A673 (cell line): ENCODE measurements at regions of chr13 and their contacts with region 1.

Region 1: DNA sequence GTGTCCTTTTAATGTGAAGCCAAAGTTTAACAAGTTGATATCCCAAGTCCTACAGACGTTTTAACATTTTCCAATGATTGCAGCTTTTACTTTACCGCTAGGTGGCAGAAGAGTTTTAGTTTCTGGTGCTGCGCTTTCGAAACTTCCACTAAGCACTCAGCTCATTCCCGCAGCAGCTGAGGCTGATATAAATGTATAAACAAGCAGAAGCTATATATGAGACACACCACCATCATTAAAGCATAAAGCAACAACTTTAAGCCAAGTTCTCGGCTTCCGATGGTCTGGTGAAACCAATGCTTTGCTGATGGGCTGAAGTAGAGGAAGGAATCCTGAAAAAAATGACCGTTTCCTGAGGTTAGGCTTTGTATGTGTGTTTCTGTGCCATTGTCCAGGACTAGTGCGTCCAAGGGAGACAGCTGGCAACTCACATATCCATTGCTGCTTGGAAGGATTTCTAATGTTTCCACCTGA is 753.9 kb downstream of the OLFM4 start:
- DNase-seq: peak; percentile 77
- H3K4me3 ChIP-seq: peak overlapping the region; percentile 2
- H3K27ac ChIP-seq: no peak overlapping the region
- H3K4me1 ChIP-seq: no peaks in the 10 kb centered on the region
- H3K27me3 ChIP-seq: no peaks in the 10 kb centered on the region
- CTCF ChIP-seq: peak; percentile 74

Region 2: GRCh38 chr13:53151336-53152056 is 631.0 kb before region 1 on chr13:
- CTCF ChIA-PET with region 1: no interaction called
- POLR2A ChIA-PET with region 1: no interaction called
- intact Hi-C with region 1: no loop called
- DNase-seq: peak; percentile 79
- H3K4me3 ChIP-seq: no peak overlapping the region
- H3K27ac ChIP-seq: no peak overlapping the region
- H3K4me1 ChIP-seq: peaks cover 7% of the 10 kb centered on the region
- H3K27me3 ChIP-seq: no peaks in the 10 kb centered on the region
- CTCF ChIP-seq: peak; percentile 95

Region 3: GRCh38 chr13:53250266-53250875 is 532.2 kb before region 1 on chr13:
- CTCF ChIA-PET with region 1: interaction called, 17 read pairs
- POLR2A ChIA-PET with region 1: no interaction called
- intact Hi-C with region 1: loop called (anchors 2 kb)
- DNase-seq: peak; percentile 85
- H3K4me3 ChIP-seq: no peak overlapping the region
- H3K27ac ChIP-seq: no peak overlapping the region
- H3K4me1 ChIP-seq: no peaks in the 10 kb centered on the region
- H3K27me3 ChIP-seq: no peaks in the 10 kb centered on the region
- CTCF ChIP-seq: peak; percentile 94

Region 4: DNA sequence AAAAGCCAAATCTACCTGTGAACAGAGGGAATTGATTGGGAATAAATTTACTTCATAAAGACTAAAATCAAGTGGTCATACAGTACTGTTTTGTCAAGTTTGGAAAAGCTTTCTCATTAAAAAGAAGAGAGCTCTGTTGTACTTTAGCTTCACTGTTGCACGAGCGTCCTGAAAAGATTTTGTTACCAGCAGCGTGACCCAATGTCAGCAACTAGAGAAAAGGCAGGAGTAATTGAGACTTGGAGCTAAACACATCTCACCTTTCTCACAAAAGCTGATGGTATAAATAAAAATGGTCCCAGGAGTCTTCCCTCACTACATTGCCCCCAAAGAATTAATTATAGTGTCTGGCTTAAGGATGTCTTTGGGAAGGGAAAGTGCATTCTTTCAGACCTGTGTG is 140.2 kb before region 1 on chr13:
- CTCF ChIA-PET with region 1: no interaction called
- POLR2A ChIA-PET with region 1: no interaction called
- intact Hi-C with region 1: no loop called
- DNase-seq: no peak
- H3K4me3 ChIP-seq: no peak overlapping the region
- H3K27ac ChIP-seq: no peak overlapping the region
- H3K4me1 ChIP-seq: no peaks in the 10 kb centered on the region
- H3K27me3 ChIP-seq: no peaks in the 10 kb centered on the region
- CTCF ChIP-seq: no peak

Region 5: GRCh38 chr13:53719281-53719680 is 63.2 kb before region 1 on chr13:
- CTCF ChIA-PET with region 1: no interaction called
- POLR2A ChIA-PET with region 1: no interaction called
- intact Hi-C with region 1: no loop called
- DNase-seq: no peak
- H3K4me3 ChIP-seq: no peak overlapping the region
- H3K27ac ChIP-seq: no peak overlapping the region
- H3K4me1 ChIP-seq: no peaks in the 10 kb centered on the region
- H3K27me3 ChIP-seq: no peaks in the 10 kb centered on the region
- CTCF ChIP-seq: no peak

Region 6: DNA sequence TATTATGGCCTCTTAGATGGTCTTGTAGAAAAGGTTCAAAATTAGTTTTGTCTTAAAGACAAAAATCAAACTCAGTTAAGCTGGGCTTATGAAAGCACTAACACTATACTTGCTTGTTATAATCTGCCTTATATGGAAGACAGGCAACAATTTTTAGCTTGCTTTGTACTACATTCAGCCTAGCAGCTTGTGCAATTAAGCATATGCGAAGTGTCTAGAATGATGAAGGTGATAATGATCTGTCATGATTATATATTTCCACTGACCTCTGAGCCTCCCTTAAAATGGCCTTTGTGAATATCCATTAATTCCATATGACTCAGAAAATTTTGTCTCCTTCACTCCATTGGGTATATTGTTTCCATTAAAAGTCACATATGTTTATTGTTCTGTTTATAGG is 81.0 kb after region 1 on chr13:
- CTCF ChIA-PET with region 1: no interaction called
- POLR2A ChIA-PET with region 1: no interaction called
- intact Hi-C with region 1: no loop called
- DNase-seq: no peak
- H3K4me3 ChIP-seq: no peak overlapping the region
- H3K27ac ChIP-seq: no peak overlapping the region
- H3K4me1 ChIP-seq: no peaks in the 10 kb centered on the region
- H3K27me3 ChIP-seq: no peaks in the 10 kb centered on the region
- CTCF ChIP-seq: no peak

Region 7: GRCh38 chr13:54185785-54186184 is 403.3 kb after region 1 on chr13:
- CTCF ChIA-PET with region 1: no interaction called
- POLR2A ChIA-PET with region 1: no interaction called
- intact Hi-C with region 1: loop called (anchors 10 kb)
- DNase-seq: peak; percentile 41
- H3K4me3 ChIP-seq: no peak overlapping the region
- H3K27ac ChIP-seq: no peak overlapping the region
- H3K4me1 ChIP-seq: no peaks in the 10 kb centered on the region
- H3K27me3 ChIP-seq: no peaks in the 10 kb centered on the region
- CTCF ChIP-seq: peak; percentile 45; the same call in 1 of the 2 replicates

Region 8: GRCh38 chr13:55245005-55245644 is 1462.6 kb after region 1 on chr13:
- CTCF ChIA-PET with region 1: no interaction called
- POLR2A ChIA-PET with region 1: no interaction called
- intact Hi-C with region 1: loop called (anchors 5 kb)
- DNase-seq: peak; percentile 36
- H3K4me3 ChIP-seq: no peak overlapping the region
- H3K27ac ChIP-seq: no peak overlapping the region
- H3K4me1 ChIP-seq: no peaks in the 10 kb centered on the region
- H3K27me3 ChIP-seq: no peaks in the 10 kb centered on the region
- CTCF ChIP-seq: peak; percentile 64